Transverse colon (tissue), 4 donors: ENCODE measurements at regions of chr9 and their contacts with region 1.

Region 1: GRCh38 chr9:104927912-104928740 is at the start of gene ABCA1:
- DNase-seq: peak; percentile 95
- H3K4me3 ChIP-seq: peak within 1 kb of the TSS; percentile 49 to 84 (median 72)
- H3K27ac ChIP-seq: peak within 1 kb of the TSS; percentile 89 to 95 (median 91)
- H3K4me1 ChIP-seq: peaks cover 5 to 38% (median 15%) of the 10 kb centered on the region in 4 donors
- H3K27me3 ChIP-seq: no peaks in the 10 kb centered on the region
- CTCF ChIP-seq: no peak
- EP300 ChIP-seq: no peak
- POLR2A ChIP-seq: peak; percentile 95
- total RNA-seq, gene ABCA1: 20.5 to 67.3 (median 60.5) TPM

Region 2: GRCh38 chr9:104863180-104863883 is 64.8 kb before region 1 on chr9:
- in situ Hi-C with region 1: loop called in 1 of 4 experiments (anchors 10 kb)
- intact Hi-C with region 1: no loop called
- DNase-seq: peak; percentile 32
- H3K4me3 ChIP-seq: no peak overlapping the region
- H3K27ac ChIP-seq: peak overlapping the region; percentile 47 to 55 (median 52)
- H3K4me1 ChIP-seq: peaks cover 9 to 55% (median 26%) of the 10 kb centered on the region in 4 donors
- H3K27me3 ChIP-seq: no peaks in the 10 kb centered on the region
- CTCF ChIP-seq: peak; percentile 57 to 76 (median 64)
- EP300 ChIP-seq: no peak
- POLR2A ChIP-seq: no peak

Region 3: DNA sequence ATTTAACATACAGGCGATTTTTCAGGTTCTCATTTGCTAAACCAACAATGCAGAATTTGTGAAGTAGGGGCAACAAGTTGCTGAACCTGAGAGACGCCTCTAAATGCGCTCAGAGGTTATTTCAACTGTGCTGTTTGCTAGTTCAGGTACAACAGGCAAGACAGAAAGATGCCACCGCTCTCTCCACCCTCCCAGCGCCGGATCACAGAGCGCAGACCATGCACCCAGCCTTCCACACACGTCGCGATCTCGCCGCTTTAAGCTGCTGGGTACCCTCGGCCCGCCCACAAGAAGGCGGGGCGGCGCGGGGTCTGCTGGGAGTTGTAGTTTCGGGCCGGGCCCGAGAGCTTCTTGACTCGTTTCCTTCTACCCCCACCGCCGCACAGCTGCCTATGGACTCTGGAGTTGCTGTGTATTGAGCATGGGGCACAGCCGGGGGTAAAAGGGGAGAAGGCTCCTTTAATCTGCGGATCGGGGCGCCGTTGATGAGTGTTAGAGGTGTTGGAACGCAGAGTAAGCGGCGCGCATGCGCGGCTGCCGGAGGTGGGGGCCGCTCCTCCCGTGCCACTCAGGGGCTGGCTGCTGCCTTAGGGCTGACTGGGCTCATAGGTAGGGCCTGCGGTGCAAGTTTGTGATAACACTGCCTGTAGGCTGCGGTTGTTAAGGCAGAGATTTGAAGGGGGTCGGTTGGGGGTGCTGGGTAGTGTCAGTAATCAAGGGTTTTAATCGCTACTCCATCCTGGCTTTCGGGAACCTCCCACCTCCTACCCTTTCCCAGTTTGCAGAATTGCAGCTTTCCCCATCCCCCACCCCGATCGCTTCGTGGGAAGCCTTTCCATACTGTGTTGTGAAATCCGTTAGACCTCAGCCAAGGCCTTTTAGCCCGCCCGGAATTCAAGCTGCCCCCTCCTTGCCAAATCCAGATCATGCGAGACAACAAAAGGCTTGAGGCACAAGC is 40.2 kb after region 1 on chr9:
- in situ Hi-C with region 1: no loop called
- intact Hi-C with region 1: loop called (anchors 2 kb)
- DNase-seq: peak; percentile 91
- H3K4me3 ChIP-seq: peak overlapping the region; percentile 51 to 85 (median 64)
- H3K27ac ChIP-seq: peak overlapping the region; percentile 88 to 95 (median 93)
- H3K4me1 ChIP-seq: peaks cover 8 to 41% (median 20%) of the 10 kb centered on the region in 4 donors
- H3K27me3 ChIP-seq: no peaks in the 10 kb centered on the region
- CTCF ChIP-seq: no peak
- EP300 ChIP-seq: no peak
- POLR2A ChIP-seq: no peak

Region 4: GRCh38 chr9:105064315-105065097 is 136.4 kb after region 1 on chr9:
- in situ Hi-C with region 1: no loop called
- intact Hi-C with region 1: loop called (anchors 10 kb)
- DNase-seq: peak; percentile 93
- H3K4me3 ChIP-seq: peak overlapping the region in 1 of 4 donors; percentile 5
- H3K27ac ChIP-seq: peak overlapping the region; percentile 80 to 88 (median 86)
- H3K4me1 ChIP-seq: peaks cover 23 to 32% (median 26%) of the 10 kb centered on the region in 4 donors
- H3K27me3 ChIP-seq: no peaks in the 10 kb centered on the region
- CTCF ChIP-seq: peak in 1 of 5 experiments; percentile 32
- EP300 ChIP-seq: peak; percentile 73
- POLR2A ChIP-seq: peak; percentile 59

Region 5: DNA sequence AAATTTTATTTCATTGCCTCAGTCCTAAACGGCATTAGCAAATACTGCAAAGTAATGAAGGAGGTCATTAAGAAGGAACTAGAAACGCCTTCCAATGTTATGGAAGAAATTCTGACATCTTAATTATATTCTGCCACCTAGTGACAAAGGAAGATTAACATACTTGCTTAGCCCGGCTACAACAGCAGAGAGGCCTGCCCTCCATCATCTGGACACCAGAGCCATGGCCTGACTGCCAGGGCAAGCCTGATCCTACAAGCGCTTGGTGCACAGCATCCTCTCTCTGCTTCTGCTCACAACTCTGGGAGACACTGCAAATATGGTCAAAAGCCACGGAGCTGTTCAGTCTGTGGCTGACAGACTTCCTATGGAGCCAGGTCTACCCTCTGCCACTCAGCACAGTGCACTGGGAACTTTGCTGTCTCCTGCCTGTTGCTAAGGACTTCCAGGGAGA is 229.0 kb after region 1 on chr9:
- in situ Hi-C with region 1: loop called (anchors 5 to 10 kb)
- intact Hi-C with region 1: loop called (anchors 2 kb)
- DNase-seq: peak; percentile 61
- H3K4me3 ChIP-seq: no peak overlapping the region
- H3K27ac ChIP-seq: peak overlapping the region; percentile 22 to 66 (median 57)
- H3K4me1 ChIP-seq: peaks cover 0 to 14% (median 0%) of the 10 kb centered on the region in 4 donors
- H3K27me3 ChIP-seq: no peaks in the 10 kb centered on the region
- CTCF ChIP-seq: peak; percentile 42 to 66 (median 45)
- EP300 ChIP-seq: peak; percentile 56
- POLR2A ChIP-seq: no peak

Region 6: DNA sequence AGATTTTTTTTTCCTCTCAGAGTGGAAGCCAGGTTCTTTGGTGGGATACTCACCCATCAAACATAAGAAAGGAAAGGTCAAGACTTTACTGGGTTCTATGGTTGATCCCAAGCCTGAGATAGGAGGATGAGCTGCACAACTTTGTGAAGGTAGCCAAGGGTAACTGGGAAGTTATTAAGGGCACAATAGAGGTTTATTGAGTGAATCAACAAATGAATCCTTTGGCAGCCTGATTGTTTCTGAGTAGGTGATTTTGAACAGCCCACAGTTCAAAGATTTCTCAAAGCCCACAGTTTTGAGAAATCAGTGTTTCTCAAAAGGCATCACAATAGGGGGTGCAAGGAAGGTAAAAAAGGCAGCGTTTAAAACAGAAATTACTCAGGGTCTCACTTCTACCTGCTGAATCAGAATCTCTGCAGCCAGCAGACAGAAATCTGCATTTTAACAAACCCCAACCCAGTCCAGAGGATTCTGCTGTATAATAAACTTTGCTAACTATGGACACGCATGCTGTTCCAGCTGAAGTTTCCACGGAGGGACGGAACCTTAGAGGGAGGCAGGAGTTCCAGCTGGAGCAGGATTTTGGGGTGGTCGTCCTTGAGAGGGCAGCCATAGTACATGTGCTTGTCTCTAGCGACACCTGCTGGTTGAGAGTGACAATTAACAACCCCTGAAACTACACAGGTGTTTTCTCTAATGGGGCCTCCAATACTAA is 487.0 kb after region 1 on chr9:
- in situ Hi-C with region 1: loop called in 3 of 4 experiments (anchors 10 to 25 kb)
- intact Hi-C with region 1: loop called (anchors 10 kb)
- DNase-seq: peak; percentile 63
- H3K4me3 ChIP-seq: no peak overlapping the region
- H3K27ac ChIP-seq: no peak overlapping the region
- H3K4me1 ChIP-seq: peaks cover 0 to 20% (median 3%) of the 10 kb centered on the region in 4 donors
- H3K27me3 ChIP-seq: no peaks in the 10 kb centered on the region
- CTCF ChIP-seq: peak; percentile 84 to 94 (median 90)
- EP300 ChIP-seq: no peak
- POLR2A ChIP-seq: no peak